ENCODE measurements at regions of chr10 and their contacts with region 1.

Region 1: DNA sequence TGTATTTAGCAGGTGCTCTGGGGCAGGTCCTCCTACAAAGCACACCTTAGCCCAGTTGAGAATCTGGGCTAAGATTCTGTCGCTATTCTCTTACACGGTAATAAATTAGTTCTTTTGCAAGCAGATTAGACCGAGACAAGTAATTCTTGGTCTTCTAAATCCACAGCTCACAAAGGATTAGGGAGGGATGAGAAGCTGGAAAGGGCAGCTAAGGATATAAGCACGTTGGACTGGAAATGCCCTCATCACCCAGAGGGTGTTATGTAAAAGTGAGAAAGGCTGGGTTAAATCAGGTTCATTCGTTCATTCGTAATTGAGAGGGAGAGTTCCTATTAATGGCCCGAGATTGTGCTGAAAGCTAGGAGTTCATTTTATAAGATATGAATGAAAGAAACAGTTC is 41.8 kb downstream of the PFKFB3 start:
- DNase-seq: no peak
- H3K4me3 ChIP-seq: no peak overlapping the region
- H3K27ac ChIP-seq: no peak overlapping the region
- H3K4me1 ChIP-seq: no peaks in the 10 kb centered on the region
- H3K27me3 ChIP-seq: no peaks in the 10 kb centered on the region
- CTCF ChIP-seq: no peak
- EP300 ChIP-seq: no peak
- POLR2A ChIP-seq: no peak
- RAD21 ChIP-seq: no peak

Region 2: DNA sequence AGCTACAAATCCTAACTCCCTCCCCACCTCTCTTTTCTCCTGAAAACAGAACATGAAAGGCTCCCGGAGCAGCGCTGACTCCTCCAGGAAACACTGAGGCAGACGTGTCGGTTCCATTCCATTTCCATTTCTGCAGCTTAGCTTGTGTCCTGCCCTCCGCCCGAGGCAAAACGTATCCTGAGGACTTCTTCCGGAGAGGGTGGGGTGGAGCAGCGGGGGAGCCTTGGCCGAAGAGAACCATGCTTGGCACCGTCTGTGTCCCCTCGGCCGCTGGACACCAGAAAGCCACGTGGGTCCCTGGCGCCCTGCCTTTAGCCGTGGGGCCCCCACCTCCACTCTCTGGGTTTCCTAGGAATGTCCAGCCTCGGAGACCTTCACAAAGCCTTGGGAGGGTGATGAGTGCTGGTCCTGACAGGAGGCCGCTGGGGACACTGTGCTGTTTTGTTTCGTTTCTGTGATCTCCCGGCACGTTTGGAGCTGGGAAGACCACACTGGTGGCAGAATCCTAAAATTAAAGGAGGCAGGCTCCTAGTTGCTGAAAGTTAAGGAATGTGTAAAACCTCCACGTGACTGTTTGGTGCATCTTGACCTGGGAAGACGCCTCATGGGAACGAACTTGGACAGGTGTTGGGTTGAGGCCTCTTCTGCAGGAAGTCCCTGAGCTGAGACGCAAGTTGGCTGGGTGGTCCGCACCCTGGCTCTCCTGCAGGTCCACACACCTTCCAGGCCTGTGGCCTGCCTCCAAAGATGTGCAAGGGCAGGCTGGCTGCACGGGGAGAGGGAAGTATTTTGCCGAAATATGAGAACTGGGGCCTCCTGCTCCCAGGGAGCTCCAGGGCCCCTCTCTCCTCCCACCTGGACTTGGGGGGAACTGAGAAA is 11.4 kb before region 1 on chr10:
- CTCF ChIA-PET with region 1: interaction called, 15 read pairs
- POLR2A ChIA-PET with region 1: no interaction called
- DNase-seq: no peak
- H3K4me3 ChIP-seq: no peak overlapping the region
- H3K27ac ChIP-seq: no peak overlapping the region
- H3K4me1 ChIP-seq: no peaks in the 10 kb centered on the region
- H3K27me3 ChIP-seq: no peaks in the 10 kb centered on the region
- CTCF ChIP-seq: no peak
- EP300 ChIP-seq: no peak
- POLR2A ChIP-seq: no peak
- RAD21 ChIP-seq: no peak

Region 3: GRCh38 chr10:6297522-6298381 is 53.2 kb after region 1 on chr10:
- CTCF ChIA-PET with region 1: no interaction called
- POLR2A ChIA-PET with region 1: no interaction called
- DNase-seq: no peak
- H3K4me3 ChIP-seq: no peak overlapping the region
- H3K27ac ChIP-seq: no peak overlapping the region
- H3K4me1 ChIP-seq: peaks cover 0 to 3% (median 0%) of the 10 kb centered on the region in 4 experiments; a peak in 2 of 7 replicates
- H3K27me3 ChIP-seq: no peaks in the 10 kb centered on the region
- CTCF ChIP-seq: no peak
- EP300 ChIP-seq: no peak
- POLR2A ChIP-seq: no peak
- RAD21 ChIP-seq: no peak